ENCODE measurements at regions of chr16 and their contacts with region 1.

Region 1: DNA sequence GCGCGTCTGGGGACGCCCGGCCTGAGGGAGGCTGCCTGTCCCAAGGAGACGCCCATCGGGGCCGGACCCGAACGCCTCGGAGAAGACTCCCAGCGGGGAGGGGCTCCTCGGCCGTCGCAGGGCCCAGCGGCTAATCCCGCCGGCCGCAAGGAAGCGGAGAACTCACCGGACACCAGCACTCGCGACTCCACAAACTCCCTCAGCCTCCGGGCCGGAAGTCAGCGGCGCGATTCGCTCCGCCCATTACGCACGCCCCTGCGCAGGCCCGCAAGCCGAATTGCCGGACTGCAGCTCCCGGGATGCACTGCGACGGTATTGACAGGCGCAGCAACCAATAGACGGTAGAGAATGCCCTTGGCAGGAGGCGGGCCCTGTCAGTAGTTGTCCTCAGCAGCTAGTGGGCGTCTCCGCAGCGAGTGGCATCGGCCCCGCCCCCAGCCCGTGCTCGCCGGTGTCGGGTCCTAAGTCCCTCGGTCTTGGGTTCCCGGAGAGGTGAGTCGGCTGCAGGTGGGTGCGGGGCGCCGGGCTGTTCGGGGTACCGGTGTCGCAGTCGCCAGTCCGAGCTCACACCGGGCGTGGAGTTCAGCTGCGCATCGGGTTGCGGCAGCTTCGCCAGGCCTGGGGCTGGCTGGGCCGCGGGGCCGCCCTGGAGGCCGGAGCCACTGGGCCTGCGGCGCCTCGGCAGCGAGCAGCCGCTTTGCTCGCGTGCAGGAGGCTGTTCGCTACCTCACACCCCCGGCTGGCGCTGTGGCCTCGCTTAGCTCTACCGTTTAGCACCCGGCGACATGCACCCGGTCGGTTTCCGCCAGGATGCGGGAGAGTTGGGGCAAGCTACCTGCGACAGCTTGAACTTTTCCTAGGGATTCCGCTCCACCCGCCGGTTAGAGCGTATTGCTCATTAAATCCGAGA is at the starts of genes ZNF174 and ZSCAN32:
- DNase-seq: peak; percentile 100
- total RNA-seq, gene ZNF174: 7.1 to 8.2 TPM
- total RNA-seq, gene ZSCAN32: 10.8 to 11.9 TPM

Region 2: GRCh38 chr16:3348547-3349167 is 52.4 kb before region 1 on chr16:
- intact Hi-C with region 1: no loop called
- DNase-seq: no peak

Region 3: DNA sequence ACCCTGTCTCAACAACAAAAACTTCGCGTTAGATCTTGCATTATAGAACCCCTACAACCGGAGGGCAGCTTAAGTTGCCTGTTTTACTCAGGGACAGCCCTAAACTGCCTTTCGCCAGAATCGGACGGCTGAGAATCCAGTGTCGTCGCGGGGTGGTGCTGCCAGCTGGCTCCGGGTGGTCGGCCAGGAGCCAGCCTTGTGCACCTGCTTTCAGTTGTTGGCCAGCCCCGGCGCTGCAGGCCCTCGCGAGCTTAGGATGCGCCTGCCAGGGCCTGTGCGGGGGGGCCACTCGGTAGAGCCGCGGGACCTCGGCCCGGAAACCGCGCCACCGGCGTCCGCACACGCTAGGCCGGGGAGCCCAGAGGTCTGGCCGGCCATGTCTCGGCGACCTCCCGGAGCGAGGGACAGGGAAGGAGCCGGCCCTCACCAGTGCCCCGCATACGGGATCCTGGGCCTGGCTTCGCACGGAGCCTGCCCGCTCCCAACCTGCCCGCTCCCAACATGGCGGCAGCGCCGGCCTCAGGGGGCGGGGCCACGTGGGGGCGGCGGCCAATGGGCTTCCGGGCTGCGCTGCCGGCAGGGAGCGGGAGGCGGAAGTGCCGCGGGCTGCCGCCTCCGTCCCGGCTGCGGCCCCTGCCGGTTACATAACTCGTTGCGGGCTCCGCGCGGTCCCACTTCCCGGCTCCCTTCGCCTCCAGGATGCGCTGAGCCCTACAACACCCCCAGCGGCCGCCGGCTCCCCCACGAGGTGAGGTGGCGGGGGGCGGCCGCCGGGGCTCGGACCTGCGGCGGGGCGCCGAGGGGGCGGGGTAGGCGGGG is 56.6 kb after region 1 on chr16:
- intact Hi-C with region 1: loop called in 1 of 2 experiments (anchors 10 kb)
- DNase-seq: peak; percentile 97

Region 4: DNA sequence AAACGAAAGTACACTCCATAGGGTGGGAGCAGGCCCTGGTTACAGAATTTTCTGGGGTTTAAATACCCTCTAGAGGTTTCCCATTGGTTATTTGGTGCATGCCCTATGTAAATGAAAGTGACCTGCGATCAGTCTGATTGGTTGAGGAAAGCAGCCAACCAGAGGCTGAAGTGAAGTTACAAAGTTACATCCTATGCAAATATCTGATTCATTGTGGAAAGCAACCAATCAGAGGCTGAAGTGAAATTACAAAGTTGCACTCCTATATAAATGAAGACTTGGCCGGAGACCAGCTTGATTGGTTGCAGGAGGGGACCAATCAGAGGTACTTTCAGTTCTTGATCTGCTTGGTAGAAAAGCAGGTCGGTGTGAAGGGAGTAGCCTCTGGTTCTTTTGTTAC is 66.9 kb after region 1 on chr16:
- intact Hi-C with region 1: no loop called
- DNase-seq: no peak

Measured in posterior vena cava (tissue), 2 donors.